ENCODE measurements at regions of chr5 and their contacts with region 1.

Region 1: GRCh38 chr5:157157293-157157891 is 8.7 kb downstream of the GARIN3 start:
- DNase-seq: no peak
- H3K4me3 Mint-ChIP-seq: peak overlapping the region; percentile 0
- H3K27ac Mint-ChIP-seq: peak overlapping the region; percentile 50
- H3K4me1 Mint-ChIP-seq: peaks cover 75% of the 10 kb centered on the region
- H3K27me3 Mint-ChIP-seq: no peaks in the 10 kb centered on the region

Region 2: GRCh38 chr5:157172403-157172802 is 15.0 kb after region 1 on chr5:
- CTCF ChIA-PET with region 1: interaction called, 9 read pairs
- POLR2A ChIA-PET with region 1: interaction called, 260 read pairs
- DNase-seq: peak; percentile 85
- H3K4me3 Mint-ChIP-seq: peak overlapping the region; percentile 46
- H3K27ac Mint-ChIP-seq: peak overlapping the region; percentile 85
- H3K4me1 Mint-ChIP-seq: peaks cover 76% of the 10 kb centered on the region
- H3K27me3 Mint-ChIP-seq: no peaks in the 10 kb centered on the region

Region 3: DNA sequence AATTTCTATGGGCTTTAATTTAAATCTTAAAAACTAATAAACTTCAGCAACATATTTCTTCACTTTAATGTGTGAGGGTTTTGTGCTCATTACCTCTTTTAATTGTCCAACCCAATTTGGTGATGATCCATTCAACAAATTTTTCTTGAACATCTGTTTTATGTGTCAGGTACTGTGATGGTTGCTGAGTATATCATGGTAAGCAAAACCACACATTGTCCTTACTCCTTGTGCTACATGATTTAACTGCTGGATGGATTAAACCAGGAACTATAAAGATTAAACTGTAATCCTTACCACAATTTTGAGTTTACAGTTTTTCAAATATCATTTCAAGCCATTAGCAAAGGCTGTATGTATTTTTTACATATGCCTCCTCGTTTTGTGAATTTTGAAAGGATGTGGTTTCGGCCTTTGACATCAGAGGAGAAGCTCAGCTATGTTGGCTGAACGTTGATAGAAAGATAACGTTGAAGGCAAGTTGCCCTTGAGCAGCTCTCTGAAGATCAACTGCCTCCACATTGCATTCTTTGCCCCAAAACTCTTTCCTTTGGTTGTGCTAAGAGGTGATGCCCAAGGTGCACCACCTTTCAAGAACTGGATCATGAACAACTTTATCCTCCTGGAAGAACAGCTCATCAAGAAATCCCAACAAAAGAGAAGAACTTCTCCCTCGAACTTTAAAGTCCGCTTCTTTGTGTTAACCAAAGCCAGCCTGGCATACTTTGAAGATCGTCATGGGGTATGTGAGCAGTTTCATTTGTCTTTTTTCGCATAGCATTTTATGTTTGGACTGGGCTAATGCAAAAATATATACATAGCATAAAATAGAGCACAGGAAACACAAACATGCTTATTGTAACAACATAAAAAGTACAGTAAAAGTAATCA is 23.2 kb after region 1 on chr5 and contains the start of gene ITK:
- CTCF ChIA-PET with region 1: interaction called, 11 read pairs
- POLR2A ChIA-PET with region 1: interaction called, 260 read pairs
- DNase-seq: peak; percentile 67
- H3K4me3 Mint-ChIP-seq: peak within 1 kb of the TSS; percentile 94
- H3K27ac Mint-ChIP-seq: peak within 1 kb of the TSS; percentile 99
- H3K4me1 Mint-ChIP-seq: peaks cover 49% of the 10 kb centered on the region
- H3K27me3 Mint-ChIP-seq: no peaks in the 10 kb centered on the region
- total RNA-seq, gene ITK: 247 to 249 TPM

Region 4: GRCh38 chr5:157198277-157198986 is 41.0 kb after region 1 on chr5:
- CTCF ChIA-PET with region 1: interaction called, 3 read pairs
- POLR2A ChIA-PET with region 1: interaction called, 260 read pairs
- DNase-seq: peak; percentile 58
- H3K4me3 Mint-ChIP-seq: peak overlapping the region; percentile 55
- H3K27ac Mint-ChIP-seq: peak overlapping the region; percentile 89
- H3K4me1 Mint-ChIP-seq: peaks cover 94% of the 10 kb centered on the region
- H3K27me3 Mint-ChIP-seq: no peaks in the 10 kb centered on the region

Region 5: DNA sequence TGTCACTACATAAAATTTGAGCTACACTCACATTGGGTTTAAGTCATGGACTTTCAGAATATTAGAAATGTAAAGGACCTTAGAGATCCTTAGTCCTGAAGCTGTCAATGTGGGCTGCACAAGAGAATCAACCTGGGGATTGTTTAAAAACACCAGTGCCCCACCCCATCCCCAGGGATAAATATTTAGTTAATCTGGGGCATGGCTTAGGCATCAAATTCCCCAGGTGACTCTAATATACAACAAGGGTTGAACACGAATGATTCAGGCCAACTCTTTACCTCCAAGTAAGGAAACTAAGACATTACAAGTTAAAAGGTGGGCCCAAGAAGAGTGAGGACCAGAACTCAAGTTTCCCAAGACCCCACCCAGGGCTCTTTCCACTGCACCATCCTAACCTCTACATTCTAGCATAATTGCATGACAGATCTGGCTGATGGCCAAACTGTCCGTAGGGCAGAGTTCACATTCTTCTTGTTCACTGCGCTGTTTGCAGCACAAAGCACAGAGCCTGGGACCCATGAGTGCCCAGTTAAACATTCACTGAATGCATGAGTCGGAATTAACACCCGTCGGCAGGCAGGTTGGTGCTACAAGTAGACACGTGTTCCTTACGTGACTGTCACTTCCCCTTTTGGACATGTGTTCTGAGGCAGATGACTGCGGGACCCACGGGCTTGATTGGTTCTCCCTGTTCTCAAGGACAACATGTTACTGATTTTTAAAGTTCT is 133.8 kb after region 1 on chr5:
- CTCF ChIA-PET with region 1: no interaction called
- POLR2A ChIA-PET with region 1: no interaction called
- DNase-seq: no peak
- H3K4me3 Mint-ChIP-seq: no peak overlapping the region
- H3K27ac Mint-ChIP-seq: no peak overlapping the region
- H3K4me1 Mint-ChIP-seq: peaks cover 50% of the 10 kb centered on the region
- H3K27me3 Mint-ChIP-seq: no peaks in the 10 kb centered on the region